ENCODE measurements at regions of chr13 and their contacts with region 1.

Region 1: GRCh38 chr13:110108347-110109174 is 198.4 kb downstream of the COL4A1 start:
- DNase-seq: peak; percentile 88
- ATAC-seq: peak; percentile 80
- H3K4me3 ChIP-seq: no peak overlapping the region
- H3K27ac ChIP-seq: no peak overlapping the region
- H3K4me1 ChIP-seq: peaks cover 18% of the 10 kb centered on the region
- H3K27me3 ChIP-seq: no peaks in the 10 kb centered on the region
- CTCF ChIP-seq: peak; percentile 91
- POLR2A ChIP-seq: peak; percentile 53; the same call in 1 of the 2 replicates
- RAD21 ChIP-seq: peak; percentile 99

Region 2: DNA sequence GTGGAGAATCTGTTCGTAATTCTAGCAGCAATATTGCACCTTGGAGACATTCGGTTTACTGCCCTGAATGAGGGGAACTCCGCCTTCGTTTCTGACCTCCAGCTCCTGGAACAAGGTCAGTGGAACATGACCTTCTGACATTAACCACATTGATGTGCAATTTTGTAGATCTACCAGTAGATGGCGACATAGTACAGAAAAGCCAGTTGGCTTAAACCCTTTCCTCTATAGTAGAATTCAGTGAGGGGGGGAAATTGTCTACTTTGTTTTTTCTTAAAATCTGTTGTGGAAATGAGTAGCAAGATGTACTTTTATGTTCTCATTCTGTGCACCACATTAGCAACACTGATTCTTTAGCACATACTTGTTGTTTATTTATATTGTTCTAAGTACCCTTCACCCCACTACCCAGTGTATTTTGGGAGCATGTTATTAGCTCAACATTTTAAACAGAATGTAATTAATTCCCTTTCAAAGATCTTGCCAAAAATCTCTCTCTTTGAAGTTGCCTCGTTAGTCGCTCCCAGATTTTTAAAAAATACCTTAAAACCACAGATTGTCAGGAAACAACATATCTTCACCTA is 1146.9 kb before region 1 on chr13:
- CTCF ChIA-PET with region 1: no interaction called
- POLR2A ChIA-PET with region 1: no interaction called
- dilution Hi-C with region 1: no loop called
- in situ Hi-C with region 1: loop called (anchors 5 kb)
- intact Hi-C with region 1: loop called (anchors 1 kb)
- DNase-seq: peak; percentile 62
- ATAC-seq: peak; percentile 56
- H3K4me3 ChIP-seq: no peak overlapping the region
- H3K27ac ChIP-seq: no peak overlapping the region
- H3K4me1 ChIP-seq: peaks cover 11% of the 10 kb centered on the region
- H3K27me3 ChIP-seq: no peaks in the 10 kb centered on the region
- CTCF ChIP-seq: peak; percentile 88
- POLR2A ChIP-seq: no peak
- RAD21 ChIP-seq: peak; percentile 94

Region 3: GRCh38 chr13:109786457-109787134 is 322.0 kb before region 1 on chr13 and contains the start of gene IRS2:
- CTCF ChIA-PET with region 1: interaction called, 3 read pairs
- POLR2A ChIA-PET with region 1: interaction called, 10 read pairs
- dilution Hi-C with region 1: loop called (anchors 25 kb)
- in situ Hi-C with region 1: loop called (anchors 5 kb)
- intact Hi-C with region 1: loop called (anchors 1 kb)
- DNase-seq: peak; percentile 90
- ATAC-seq: peak; percentile 82
- H3K4me3 ChIP-seq: peak within 1 kb of the TSS; percentile 92
- H3K27ac ChIP-seq: peak within 1 kb of the TSS; percentile 87
- H3K4me1 ChIP-seq: peaks cover 7% of the 10 kb centered on the region
- H3K27me3 ChIP-seq: peaks cover 2% of the 10 kb centered on the region; the same call in 1 of the 2 replicates
- CTCF ChIP-seq: no peak
- POLR2A ChIP-seq: peak; percentile 96
- RAD21 ChIP-seq: no peak
- total RNA-seq, gene IRS2: 0.36 and 0.83 TPM in 2 replicates

Region 4: GRCh38 chr13:109998726-109999533 is 109.6 kb before region 1 on chr13:
- CTCF ChIA-PET with region 1: no interaction called
- POLR2A ChIA-PET with region 1: no interaction called
- dilution Hi-C with region 1: no loop called
- in situ Hi-C with region 1: no loop called
- intact Hi-C with region 1: loop called (anchors 5 kb)
- DNase-seq: peak; percentile 95
- ATAC-seq: peak; percentile 84
- H3K4me3 ChIP-seq: no peak overlapping the region
- H3K27ac ChIP-seq: no peak overlapping the region
- H3K4me1 ChIP-seq: peaks cover 20% of the 10 kb centered on the region
- H3K27me3 ChIP-seq: no peaks in the 10 kb centered on the region
- CTCF ChIP-seq: no peak
- POLR2A ChIP-seq: no peak
- RAD21 ChIP-seq: no peak; the same call in 1 of the 2 replicates